ENCODE measurements at regions of chr17 and their contacts with region 1.

Region 1: GRCh38 chr17:61057257-61057656 is 342.4 kb upstream of the TBX2 start:
- DNase-seq: no peak
- H3K4me3 Mint-ChIP-seq: no peak overlapping the region
- H3K27ac Mint-ChIP-seq: no peak overlapping the region
- H3K4me1 Mint-ChIP-seq: peaks cover 8% of the 10 kb centered on the region
- H3K27me3 Mint-ChIP-seq: no peaks in the 10 kb centered on the region

Region 2: GRCh38 chr17:61139219-61139618 is 82.0 kb after region 1 on chr17:
- CTCF ChIA-PET with region 1: no interaction called
- intact Hi-C with region 1: loop called (anchors 1 kb)
- DNase-seq: peak; percentile 75
- H3K4me3 Mint-ChIP-seq: peak overlapping the region; percentile 34
- H3K27ac Mint-ChIP-seq: peak overlapping the region; percentile 37
- H3K4me1 Mint-ChIP-seq: peaks cover 19% of the 10 kb centered on the region
- H3K27me3 Mint-ChIP-seq: no peaks in the 10 kb centered on the region

Region 3: DNA sequence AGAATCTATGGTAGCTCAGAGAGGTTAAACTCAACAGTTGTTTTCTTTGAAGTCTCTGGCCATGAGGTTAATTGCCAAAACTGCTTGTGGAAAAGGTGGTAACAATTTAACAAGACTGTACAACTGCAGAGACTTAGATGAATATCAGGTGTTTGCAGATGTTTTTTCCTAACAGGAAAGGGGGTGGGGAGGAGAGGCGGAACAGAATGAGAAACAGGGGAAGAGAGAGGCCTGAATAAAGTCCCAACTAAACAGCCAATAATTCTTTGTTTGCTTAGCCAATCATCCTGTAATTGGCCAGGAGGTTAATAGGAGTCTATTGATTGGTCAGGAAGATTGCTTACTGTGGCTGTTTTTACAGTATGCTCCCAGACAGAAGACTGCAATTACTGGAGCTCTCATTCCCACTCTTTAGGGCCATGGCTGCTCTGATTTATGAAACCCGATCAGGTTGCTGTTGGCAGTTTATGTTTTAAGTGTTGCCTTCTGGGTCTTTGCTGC is 92.7 kb after region 1 on chr17:
- CTCF ChIA-PET with region 1: no interaction called
- intact Hi-C with region 1: no loop called
- DNase-seq: no peak
- H3K4me3 Mint-ChIP-seq: no peak overlapping the region
- H3K27ac Mint-ChIP-seq: no peak overlapping the region
- H3K4me1 Mint-ChIP-seq: peaks cover 20% of the 10 kb centered on the region
- H3K27me3 Mint-ChIP-seq: no peaks in the 10 kb centered on the region

Region 4: GRCh38 chr17:61160789-61161465 is 103.7 kb after region 1 on chr17:
- CTCF ChIA-PET with region 1: no interaction called
- intact Hi-C with region 1: loop called (anchors 2 kb)
- DNase-seq: no peak
- H3K4me3 Mint-ChIP-seq: no peak overlapping the region
- H3K27ac Mint-ChIP-seq: peak overlapping the region; percentile 61
- H3K4me1 Mint-ChIP-seq: peaks cover 32% of the 10 kb centered on the region
- H3K27me3 Mint-ChIP-seq: no peaks in the 10 kb centered on the region

Region 5: DNA sequence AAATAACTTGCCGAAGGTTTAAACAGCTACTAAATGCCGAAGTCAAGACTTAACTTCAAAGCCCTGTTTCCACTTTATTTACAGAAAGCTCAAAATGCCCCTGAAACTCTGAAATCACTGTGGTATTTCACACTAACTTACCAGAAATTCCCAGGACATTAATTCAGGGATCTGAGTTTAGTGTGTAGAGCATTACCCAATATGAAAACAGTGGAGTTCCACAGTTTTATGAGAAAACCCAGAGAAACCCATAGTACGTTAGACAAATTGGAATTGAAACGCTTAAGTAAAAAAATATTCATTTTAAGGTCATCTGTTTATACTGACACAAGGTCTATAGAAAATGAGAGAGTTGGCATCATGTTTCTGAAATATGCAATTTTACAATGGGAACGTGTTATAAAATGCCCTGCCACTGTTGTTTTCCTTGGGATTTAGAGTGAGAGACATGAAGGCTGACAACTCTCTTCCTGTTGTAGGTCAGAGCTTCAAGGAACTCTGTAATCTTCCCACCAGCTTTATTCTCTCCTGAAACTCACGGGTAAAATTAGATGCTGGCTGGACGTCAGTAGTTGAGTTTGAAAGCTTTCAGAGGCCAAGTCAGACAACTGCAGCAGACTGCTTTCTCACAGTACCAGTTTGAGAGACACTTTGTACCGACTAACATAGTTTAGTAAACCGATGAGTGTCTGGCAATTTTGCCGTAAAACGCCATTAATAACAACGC is 203.0 kb after region 1 on chr17:
- CTCF ChIA-PET with region 1: no interaction called
- intact Hi-C with region 1: no loop called
- DNase-seq: no peak
- H3K4me3 Mint-ChIP-seq: no peak overlapping the region
- H3K27ac Mint-ChIP-seq: no peak overlapping the region
- H3K4me1 Mint-ChIP-seq: no peaks in the 10 kb centered on the region
- H3K27me3 Mint-ChIP-seq: no peaks in the 10 kb centered on the region

Region 6: DNA sequence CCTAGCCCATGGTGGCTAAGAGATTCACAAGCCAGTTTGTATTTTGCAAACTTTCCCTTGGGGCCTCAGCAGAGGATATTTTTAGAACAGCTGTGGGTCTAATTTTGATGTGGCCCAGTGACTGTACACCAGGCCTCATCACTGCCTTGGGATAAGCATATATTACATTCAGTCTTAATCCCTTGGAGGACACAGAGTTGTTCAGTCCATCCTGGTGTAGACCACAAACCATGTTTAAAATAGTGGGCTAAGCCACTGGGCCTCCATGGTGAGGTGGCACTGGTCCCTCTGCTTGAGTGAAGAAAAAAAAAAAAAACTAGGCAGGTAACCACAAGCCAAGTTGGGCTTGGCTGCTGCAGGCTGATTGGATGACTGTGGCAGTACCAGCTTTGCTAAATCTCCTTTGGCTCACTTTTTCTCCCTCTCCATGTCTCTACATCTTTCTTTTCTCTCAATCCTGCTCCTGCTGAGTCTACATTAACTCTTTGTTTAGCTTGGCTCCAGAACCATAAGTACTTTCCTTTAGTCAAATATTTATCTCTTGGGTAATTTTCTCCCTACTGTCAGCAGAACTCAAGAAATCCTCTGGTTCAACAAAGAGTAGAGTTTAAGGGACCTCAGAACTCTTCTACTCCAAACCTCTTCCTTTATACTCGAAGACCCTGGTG is 222.4 kb after region 1 on chr17:
- CTCF ChIA-PET with region 1: no interaction called
- intact Hi-C with region 1: loop called (anchors 5 kb)
- DNase-seq: no peak
- H3K4me3 Mint-ChIP-seq: no peak overlapping the region
- H3K27ac Mint-ChIP-seq: peak overlapping the region; percentile 32
- H3K4me1 Mint-ChIP-seq: peaks cover 22% of the 10 kb centered on the region
- H3K27me3 Mint-ChIP-seq: no peaks in the 10 kb centered on the region